Caki2 (cell line): ENCODE measurements at regions of chr17 and their contacts with region 1.

Region 1: GRCh38 chr17:74305865-74306654 is 20.0 kb upstream of the KIF19 start:
- DNase-seq: no peak

Region 2: GRCh38 chr17:74493381-74493833 is 187.3 kb after region 1 on chr17:
- in situ Hi-C with region 1: loop called (anchors 25 kb)
- DNase-seq: peak; percentile 49